Transverse colon (tissue), 4 donors: ENCODE measurements at regions of chr7 and their contacts with region 1.

Region 1: GRCh38 chr7:71733107-71733870 is 601.3 kb downstream of the GALNT17 start:
- DNase-seq: peak; percentile 73
- H3K4me3 ChIP-seq: no peak overlapping the region
- H3K27ac ChIP-seq: no peak overlapping the region
- H3K4me1 ChIP-seq: peaks cover 0 to 9% (median 3%) of the 10 kb centered on the region in 4 donors
- H3K27me3 ChIP-seq: no peaks in the 10 kb centered on the region
- CTCF ChIP-seq: peak; percentile 78 to 89 (median 85)
- EP300 ChIP-seq: no peak
- POLR2A ChIP-seq: no peak

Region 2: DNA sequence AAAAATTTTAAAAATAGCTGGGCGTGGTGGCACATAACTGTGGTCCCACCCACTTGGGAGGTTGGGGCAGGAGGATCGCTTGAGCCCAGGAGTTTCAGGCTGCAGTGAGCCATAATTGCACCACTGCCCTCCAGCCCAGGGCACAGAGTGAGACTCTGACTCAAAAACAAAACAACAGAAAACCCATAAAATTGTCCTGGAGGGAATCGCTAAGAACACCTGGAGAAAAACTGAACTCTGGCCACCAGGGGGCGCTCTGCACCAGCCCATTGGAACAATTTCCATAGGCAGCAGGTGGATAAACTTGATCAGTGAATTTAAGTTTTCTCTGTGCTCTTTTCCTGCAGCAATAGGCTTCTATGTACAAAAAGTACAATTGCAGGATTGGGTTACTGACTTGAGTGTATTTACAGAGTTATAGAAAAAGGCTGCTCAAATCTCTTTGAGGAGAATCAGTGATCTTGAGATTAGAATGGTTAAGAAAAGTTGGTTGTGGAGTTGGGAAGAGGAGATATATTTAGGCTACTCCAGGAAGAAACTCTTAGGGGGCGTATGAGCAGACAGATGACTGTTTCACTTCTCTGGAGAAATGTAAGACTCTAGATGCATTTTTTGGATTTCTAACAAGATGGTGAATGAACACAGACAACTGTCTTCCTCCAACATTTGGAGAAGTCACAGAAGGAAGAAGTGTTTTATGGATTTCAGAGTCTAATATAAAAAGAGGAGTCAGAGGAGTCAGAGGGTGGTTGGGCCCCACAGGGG is 876.2 kb before region 1 on chr7:
- in situ Hi-C with region 1: loop called (anchors 5 to 10 kb)
- intact Hi-C with region 1: loop called (anchors 2 kb)
- DNase-seq: peak; percentile 60
- H3K4me3 ChIP-seq: no peak overlapping the region
- H3K27ac ChIP-seq: no peak overlapping the region
- H3K4me1 ChIP-seq: no peaks in the 10 kb centered on the region
- H3K27me3 ChIP-seq: no peaks in the 10 kb centered on the region
- CTCF ChIP-seq: peak; percentile 74 to 90 (median 88)
- EP300 ChIP-seq: no peak
- POLR2A ChIP-seq: no peak

Region 3: DNA sequence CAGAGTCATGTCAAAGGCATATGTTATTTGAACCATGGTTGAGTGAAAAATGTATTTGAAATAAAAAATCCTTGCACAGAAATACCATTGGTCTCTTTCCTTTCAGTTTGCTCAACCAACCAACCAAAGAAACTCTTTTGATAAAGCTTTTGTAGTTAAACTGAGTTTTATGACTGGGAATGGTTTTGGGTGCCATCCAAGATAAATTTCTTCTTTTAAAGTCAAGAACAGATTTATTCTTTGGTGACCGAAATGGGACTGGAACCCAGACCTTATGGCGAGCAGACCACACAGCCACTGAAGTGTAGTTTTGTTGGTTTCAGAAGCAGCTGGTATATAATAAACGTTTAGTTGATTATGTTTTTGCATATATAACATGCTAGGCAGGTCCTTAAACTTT is 604.2 kb before region 1 on chr7:
- in situ Hi-C with region 1: no loop called
- intact Hi-C with region 1: loop called (anchors 2 kb)
- DNase-seq: no peak
- H3K4me3 ChIP-seq: no peak overlapping the region
- H3K27ac ChIP-seq: no peak overlapping the region
- H3K4me1 ChIP-seq: no peaks in the 10 kb centered on the region
- H3K27me3 ChIP-seq: peaks cover 24% of the 10 kb centered on the region
- CTCF ChIP-seq: no peak
- EP300 ChIP-seq: no peak
- POLR2A ChIP-seq: no peak